MCF 10A (cell line): ENCODE measurements at regions of chrX and their contacts with region 1.

Region 1: GRCh38 chrX:98194036-98194435 is 1310.3 kb downstream of the RPA4 start:
- DNase-seq: no peak
- H3K4me3 Mint-ChIP-seq: no peak overlapping the region
- H3K27ac Mint-ChIP-seq: no peak overlapping the region
- H3K4me1 Mint-ChIP-seq: no peaks in the 10 kb centered on the region
- H3K27me3 Mint-ChIP-seq: peaks cover 5% of the 10 kb centered on the region
- CTCF ChIP-seq: no peak

Region 2: DNA sequence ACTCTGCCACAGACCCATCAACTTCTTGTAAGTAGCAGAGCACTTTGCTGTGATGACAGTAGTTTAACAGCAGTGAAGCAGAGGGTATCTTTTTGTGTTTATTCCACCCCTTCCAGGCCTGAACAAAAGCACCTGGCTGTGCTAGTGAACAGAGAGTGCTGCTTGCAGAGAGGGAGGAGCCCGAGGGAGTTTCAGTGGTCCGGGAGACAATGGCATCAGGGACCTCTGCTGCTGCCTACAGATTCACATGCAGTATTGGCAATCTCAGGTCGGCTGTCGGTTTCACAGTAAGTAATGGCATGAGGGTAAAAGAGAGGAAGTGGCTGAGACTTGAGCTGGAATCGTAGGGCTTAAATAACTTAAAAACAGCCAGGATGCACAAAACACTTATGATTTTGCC is 554.5 kb before region 1 on chrX:
- CTCF ChIA-PET with region 1: no interaction called
- POLR2A ChIA-PET with region 1: no interaction called
- intact Hi-C with region 1: no loop called
- DNase-seq: no peak
- H3K4me3 Mint-ChIP-seq: no peak overlapping the region
- H3K27ac Mint-ChIP-seq: no peak overlapping the region
- H3K4me1 Mint-ChIP-seq: no peaks in the 10 kb centered on the region
- H3K27me3 Mint-ChIP-seq: peaks cover 12% of the 10 kb centered on the region
- CTCF ChIP-seq: no peak

Region 3: GRCh38 chrX:98141466-98141865 is 52.6 kb before region 1 on chrX:
- CTCF ChIA-PET with region 1: no interaction called
- POLR2A ChIA-PET with region 1: no interaction called
- intact Hi-C with region 1: loop called (anchors 10 kb)
- DNase-seq: no peak
- H3K4me3 Mint-ChIP-seq: no peak overlapping the region
- H3K27ac Mint-ChIP-seq: no peak overlapping the region
- H3K4me1 Mint-ChIP-seq: no peaks in the 10 kb centered on the region
- H3K27me3 Mint-ChIP-seq: peaks cover 26% of the 10 kb centered on the region
- CTCF ChIP-seq: no peak